ENCODE measurements at regions of chr10 and their contacts with region 1.

Region 1: DNA sequence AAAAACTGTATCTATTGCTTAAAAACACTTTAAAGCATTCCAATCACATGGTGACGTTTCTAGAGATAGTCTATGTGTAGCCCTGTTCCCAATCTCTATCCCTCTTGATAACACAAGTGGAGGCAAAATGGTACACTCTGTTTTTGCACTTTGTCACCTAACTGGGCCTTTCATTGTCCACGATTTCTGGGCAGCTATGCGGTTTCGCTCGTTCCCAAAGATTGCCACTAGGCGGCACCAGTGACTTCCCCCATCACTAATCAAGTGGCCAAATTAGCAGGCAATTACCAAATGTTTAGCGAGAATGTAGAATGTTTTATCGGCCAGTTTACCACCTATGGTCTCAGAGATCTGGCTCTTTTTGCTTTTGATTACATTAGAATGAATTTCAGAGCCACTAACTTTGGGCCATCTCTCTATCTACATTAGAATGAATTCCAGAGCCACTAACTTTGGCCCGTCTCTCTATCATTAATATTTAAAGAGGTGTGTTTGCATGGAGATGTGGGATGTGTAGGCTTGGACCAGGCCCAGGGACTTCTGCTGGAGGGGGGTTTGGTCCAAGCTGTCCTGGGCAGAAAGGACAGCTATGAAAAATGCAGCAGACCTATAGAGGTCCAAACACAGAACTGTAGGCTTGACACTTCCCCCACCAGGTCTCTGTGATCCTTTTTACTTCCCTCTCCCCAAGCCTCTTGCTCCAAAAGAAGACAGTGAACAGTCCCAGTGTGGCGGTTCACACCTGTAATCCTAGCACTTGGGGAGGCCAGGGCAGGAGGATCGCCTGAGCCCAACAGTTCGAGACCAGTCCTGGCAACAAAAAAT is 90.1 kb downstream of the EPC1 start:
- DNase-seq: peak; percentile 57
- ATAC-seq: peak; percentile 68
- H3K4me3 ChIP-seq: no peak overlapping the region
- H3K27ac ChIP-seq: no peak overlapping the region
- H3K4me1 ChIP-seq: peaks cover 0 to 23% of the 10 kb centered on the region in 2 experiments; a peak in 3 of 4 replicates
- H3K27me3 ChIP-seq: no peaks in the 10 kb centered on the region
- CTCF ChIP-seq: peak; percentile 81 to 94 (median 92)
- POLR2A ChIP-seq: no peak
- RAD21 ChIP-seq: peak; percentile 80

Region 2: DNA sequence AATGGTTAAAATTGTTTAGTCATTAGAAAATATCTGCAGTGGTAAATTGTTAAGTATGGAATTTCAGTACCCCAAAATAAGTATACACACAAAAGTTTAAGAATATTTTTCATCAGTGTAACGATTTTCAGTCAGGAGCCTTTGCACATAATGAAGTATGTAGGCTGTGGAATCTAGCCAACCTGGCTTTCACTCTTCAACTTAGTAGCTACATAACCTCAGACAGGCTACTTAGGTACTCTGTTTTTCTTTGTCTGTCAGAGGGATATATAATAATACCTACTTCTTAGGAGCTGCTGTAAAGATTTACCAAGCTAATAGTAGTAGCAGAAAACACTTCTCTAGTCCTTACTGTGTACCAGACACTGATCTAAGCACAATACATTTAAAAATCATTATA is 800.4 kb before region 1 on chr10:
- CTCF ChIA-PET with region 1: no interaction called
- POLR2A ChIA-PET with region 1: no interaction called
- RAD21 ChIA-PET with region 1: no interaction called
- intact Hi-C with region 1: no loop called
- DNase-seq: no peak
- ATAC-seq: no peak
- H3K4me3 ChIP-seq: no peak overlapping the region
- H3K27ac ChIP-seq: no peak overlapping the region
- H3K4me1 ChIP-seq: no peaks in the 10 kb centered on the region
- H3K27me3 ChIP-seq: no peaks in the 10 kb centered on the region
- CTCF ChIP-seq: no peak
- POLR2A ChIP-seq: no peak
- RAD21 ChIP-seq: no peak

Region 3: GRCh38 chr10:31961277-31962074 is 295.3 kb before region 1 on chr10:
- CTCF ChIA-PET with region 1: no interaction called
- POLR2A ChIA-PET with region 1: no interaction called
- RAD21 ChIA-PET with region 1: no interaction called
- intact Hi-C with region 1: no loop called
- DNase-seq: no peak
- ATAC-seq: peak; percentile 68
- H3K4me3 ChIP-seq: peak overlapping the region in 1 of 2 experiments; percentile 32; a peak in 2 of 4 replicates
- H3K27ac ChIP-seq: peak overlapping the region; percentile 46
- H3K4me1 ChIP-seq: peaks cover 44 to 58% of the 10 kb centered on the region in 2 experiments
- H3K27me3 ChIP-seq: no peaks in the 10 kb centered on the region
- CTCF ChIP-seq: no peak
- POLR2A ChIP-seq: no peak
- RAD21 ChIP-seq: no peak

Region 4: GRCh38 chr10:32346134-32346550 is 89.3 kb after region 1 on chr10:
- CTCF ChIA-PET with region 1: interaction called, 6 read pairs
- POLR2A ChIA-PET with region 1: interaction called, 3 read pairs
- RAD21 ChIA-PET with region 1: interaction called in 1 of 2 experiments, 3 read pairs
- intact Hi-C with region 1: loop called (anchors 1 kb)
- DNase-seq: peak; percentile 90
- ATAC-seq: peak; percentile 92
- H3K4me3 ChIP-seq: peak overlapping the region; percentile 90 to 93
- H3K27ac ChIP-seq: peak overlapping the region; percentile 100
- H3K4me1 ChIP-seq: peaks cover 4 to 13% of the 10 kb centered on the region in 2 experiments; a peak in 3 of 4 replicates
- H3K27me3 ChIP-seq: no peaks in the 10 kb centered on the region
- CTCF ChIP-seq: peak; percentile 92 to 98 (median 92)
- POLR2A ChIP-seq: no peak
- RAD21 ChIP-seq: peak; percentile 86